Activated CD4-positive, alpha-beta T cell treated with anti-CD3 and anti-CD28 coated beads for 36 hours (primary cell): ENCODE measurements at regions of chr7 and their contacts with region 1.

Region 1: GRCh38 chr7:141551094-141551781 is at the start of gene AGK:
- DNase-seq: peak; percentile 87
- ATAC-seq: peak; percentile 95
- H3K4me3 Mint-ChIP-seq: peak within 1 kb of the TSS; percentile 88
- H3K27ac Mint-ChIP-seq: peak within 1 kb of the TSS; percentile 91
- H3K4me1 Mint-ChIP-seq: peaks cover 36% of the 10 kb centered on the region
- H3K27me3 Mint-ChIP-seq: no peaks in the 10 kb centered on the region
- total RNA-seq, gene AGK: 49.7 to 52.9 TPM

Region 2: DNA sequence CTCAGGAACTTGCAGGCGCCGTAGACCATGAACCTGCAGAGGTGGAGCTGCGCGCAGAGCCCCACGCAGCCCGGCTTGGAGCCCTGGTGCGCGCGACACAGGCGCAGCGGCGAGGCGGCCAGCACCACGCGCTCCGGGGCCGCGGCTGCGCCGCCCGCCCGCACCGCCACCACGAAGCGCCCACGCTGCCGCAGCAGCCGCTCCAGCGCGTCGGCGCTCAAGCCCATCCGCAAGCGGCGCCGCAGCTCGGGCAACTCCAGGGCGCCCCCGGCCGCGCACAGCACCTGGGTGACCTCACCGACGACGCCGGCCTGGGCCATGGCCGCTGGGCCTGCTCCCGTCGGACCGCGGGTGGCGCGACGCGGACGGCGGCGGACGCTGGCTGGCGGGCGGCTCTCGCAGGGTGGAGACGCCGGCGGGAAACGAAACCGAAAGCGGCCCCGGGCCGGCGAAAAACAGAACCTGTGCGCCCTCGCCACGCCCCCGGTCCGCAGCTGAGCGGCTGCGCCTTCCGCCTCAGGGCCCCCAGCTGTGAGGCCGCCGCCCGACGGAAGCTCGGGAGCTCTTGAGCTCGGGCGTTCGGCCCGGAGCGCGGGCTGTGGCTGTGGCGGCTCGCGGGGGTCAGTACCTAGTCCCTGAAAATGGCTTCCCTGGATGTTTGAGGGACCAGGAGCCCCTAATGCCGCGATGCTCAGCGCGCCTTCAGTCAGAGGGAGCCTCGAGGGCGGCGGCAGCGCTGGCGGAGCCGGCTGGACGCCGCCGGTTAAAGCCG is 1488.5 kb before region 1 on chr7 and contains the start of gene PARP12:
- CTCF ChIA-PET with region 1: no interaction called
- POLR2A ChIA-PET with region 1: no interaction called
- intact Hi-C with region 1: loop called in 1 of 2 experiments (anchors 10 kb)
- DNase-seq: peak; percentile 91
- ATAC-seq: peak; percentile 65
- H3K4me3 Mint-ChIP-seq: peak within 1 kb of the TSS; percentile 78
- H3K27ac Mint-ChIP-seq: peak within 1 kb of the TSS; percentile 75
- H3K4me1 Mint-ChIP-seq: peaks cover 36% of the 10 kb centered on the region
- H3K27me3 Mint-ChIP-seq: no peaks in the 10 kb centered on the region
- total RNA-seq, gene PARP12: 25.7 to 28.7 TPM

Region 3: GRCh38 chr7:140696680-140697446 is 854.4 kb before region 1 on chr7 and contains the start of gene NDUFB2:
- CTCF ChIA-PET with region 1: no interaction called
- POLR2A ChIA-PET with region 1: no interaction called
- intact Hi-C with region 1: loop called in 1 of 2 experiments (anchors 1 kb)
- DNase-seq: peak; percentile 84
- ATAC-seq: peak; percentile 91
- H3K4me3 Mint-ChIP-seq: peak within 1 kb of the TSS; percentile 90
- H3K27ac Mint-ChIP-seq: peak within 1 kb of the TSS; percentile 97
- H3K4me1 Mint-ChIP-seq: peaks cover 30% of the 10 kb centered on the region
- H3K27me3 Mint-ChIP-seq: no peaks in the 10 kb centered on the region
- total RNA-seq, gene NDUFB2: 83.8 to 162 TPM

Region 4: GRCh38 chr7:141198184-141198958 is 352.9 kb before region 1 on chr7:
- CTCF ChIA-PET with region 1: no interaction called
- POLR2A ChIA-PET with region 1: no interaction called
- intact Hi-C with region 1: no loop called
- DNase-seq: no peak
- ATAC-seq: no peak
- H3K4me3 Mint-ChIP-seq: no peak overlapping the region
- H3K27ac Mint-ChIP-seq: no peak overlapping the region
- H3K4me1 Mint-ChIP-seq: no peaks in the 10 kb centered on the region
- H3K27me3 Mint-ChIP-seq: peaks cover 11% of the 10 kb centered on the region

Region 5: GRCh38 chr7:141585592-141586510 is 34.6 kb after region 1 on chr7:
- CTCF ChIA-PET with region 1: no interaction called
- POLR2A ChIA-PET with region 1: no interaction called
- intact Hi-C with region 1: no loop called
- DNase-seq: peak; percentile 67
- ATAC-seq: peak; percentile 86
- H3K4me3 Mint-ChIP-seq: peak overlapping the region; percentile 3
- H3K27ac Mint-ChIP-seq: peak overlapping the region; percentile 69
- H3K4me1 Mint-ChIP-seq: peaks cover 43% of the 10 kb centered on the region
- H3K27me3 Mint-ChIP-seq: no peaks in the 10 kb centered on the region

Region 6: DNA sequence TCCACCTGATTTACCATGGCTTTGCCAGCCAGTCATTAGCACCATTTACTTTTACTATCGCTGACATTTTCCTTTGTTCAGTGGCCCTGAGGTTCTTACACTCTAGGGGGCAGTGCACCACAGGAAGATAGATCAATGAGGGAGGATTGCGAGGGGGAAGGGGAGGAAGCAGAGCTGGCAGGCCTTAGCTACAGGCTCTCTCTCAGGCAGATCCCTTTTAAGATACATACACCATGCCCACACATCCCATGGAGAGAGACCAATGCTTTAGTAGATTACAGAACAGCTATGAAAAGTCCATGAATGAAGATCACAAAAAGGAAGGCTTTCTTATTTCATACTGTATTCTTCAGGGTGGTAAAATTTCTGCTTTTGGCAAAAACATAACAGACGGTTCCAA is 103.3 kb after region 1 on chr7:
- CTCF ChIA-PET with region 1: interaction called, 5 read pairs
- POLR2A ChIA-PET with region 1: interaction called, 4 read pairs
- intact Hi-C with region 1: loop called in 1 of 2 experiments (anchors 5 kb)
- DNase-seq: peak; percentile 77
- ATAC-seq: peak; percentile 97
- H3K4me3 Mint-ChIP-seq: no peak overlapping the region
- H3K27ac Mint-ChIP-seq: peak overlapping the region; percentile 79
- H3K4me1 Mint-ChIP-seq: peaks cover 5% of the 10 kb centered on the region
- H3K27me3 Mint-ChIP-seq: no peaks in the 10 kb centered on the region

Region 7: GRCh38 chr7:141737834-141738591 is 186.8 kb after region 1 on chr7 and contains the start of gene SSBP1:
- CTCF ChIA-PET with region 1: interaction called, 9 read pairs
- POLR2A ChIA-PET with region 1: interaction called, 3 read pairs
- intact Hi-C with region 1: loop called (anchors 1 kb)
- DNase-seq: peak; percentile 95
- ATAC-seq: peak; percentile 89
- H3K4me3 Mint-ChIP-seq: peak within 1 kb of the TSS; percentile 96
- H3K27ac Mint-ChIP-seq: peak within 1 kb of the TSS; percentile 97
- H3K4me1 Mint-ChIP-seq: peaks cover 40% of the 10 kb centered on the region
- H3K27me3 Mint-ChIP-seq: no peaks in the 10 kb centered on the region
- total RNA-seq, gene SSBP1: 183 to 245 TPM